CD8-positive, alpha-beta memory T cell (primary cell): ENCODE measurements at regions of chr19 and their contacts with region 1.

Region 1: GRCh38 chr19:47707135-47707925 is 5.9 kb upstream of the EHD2 start:
- DNase-seq: peak; percentile 47 to 77 (median 54)
- H3K4me3 ChIP-seq: no peak overlapping the region
- H3K4me3 Mint-ChIP-seq: no peak overlapping the region
- H3K27ac ChIP-seq: no peak overlapping the region
- H3K27ac Mint-ChIP-seq: peak overlapping the region in 2 of 8 donors; percentile 24 to 74
- H3K4me1 ChIP-seq: no peaks in the 10 kb centered on the region
- H3K4me1 Mint-ChIP-seq: peaks cover 2 to 7% (median 5%) of the 10 kb centered on the region in 3 donors
- H3K27me3 ChIP-seq: peaks cover 4% of the 10 kb centered on the region
- H3K27me3 Mint-ChIP-seq: peaks cover 18 to 21% of the 10 kb centered on the region in 2 donors

Region 2: DNA sequence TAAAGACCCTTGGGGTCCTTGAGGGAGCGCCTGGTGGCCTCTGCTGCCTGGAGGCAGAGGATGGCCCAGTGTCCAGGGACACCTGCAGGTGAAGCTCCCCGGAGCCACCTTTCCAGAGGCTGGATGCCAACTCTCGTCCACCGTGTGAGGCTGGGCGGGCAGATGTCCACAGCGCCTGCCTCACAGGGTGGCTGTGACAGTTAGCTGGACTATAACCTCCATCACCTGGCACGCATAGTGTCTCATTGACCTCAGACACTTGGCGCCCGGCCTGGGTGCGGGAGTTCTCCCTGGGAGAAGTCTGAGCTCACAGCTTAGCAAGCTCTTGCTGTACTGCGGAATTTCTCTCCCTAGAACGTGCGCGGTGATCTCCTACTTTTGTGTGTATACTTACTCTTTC is 88.6 kb before region 1 on chr19:
- CTCF ChIA-PET with region 1: no interaction called
- POLR2A ChIA-PET with region 1: no interaction called
- DNase-seq: no peak
- H3K4me3 ChIP-seq: no peak overlapping the region
- H3K4me3 Mint-ChIP-seq: no peak overlapping the region
- H3K27ac ChIP-seq: no peak overlapping the region
- H3K27ac Mint-ChIP-seq: no peak overlapping the region
- H3K4me1 ChIP-seq: no peaks in the 10 kb centered on the region
- H3K4me1 Mint-ChIP-seq: peaks cover 33 to 59% (median 42%) of the 10 kb centered on the region in 3 donors
- H3K27me3 ChIP-seq: no peaks in the 10 kb centered on the region
- H3K27me3 Mint-ChIP-seq: no peaks in the 10 kb centered on the region

Region 3: DNA sequence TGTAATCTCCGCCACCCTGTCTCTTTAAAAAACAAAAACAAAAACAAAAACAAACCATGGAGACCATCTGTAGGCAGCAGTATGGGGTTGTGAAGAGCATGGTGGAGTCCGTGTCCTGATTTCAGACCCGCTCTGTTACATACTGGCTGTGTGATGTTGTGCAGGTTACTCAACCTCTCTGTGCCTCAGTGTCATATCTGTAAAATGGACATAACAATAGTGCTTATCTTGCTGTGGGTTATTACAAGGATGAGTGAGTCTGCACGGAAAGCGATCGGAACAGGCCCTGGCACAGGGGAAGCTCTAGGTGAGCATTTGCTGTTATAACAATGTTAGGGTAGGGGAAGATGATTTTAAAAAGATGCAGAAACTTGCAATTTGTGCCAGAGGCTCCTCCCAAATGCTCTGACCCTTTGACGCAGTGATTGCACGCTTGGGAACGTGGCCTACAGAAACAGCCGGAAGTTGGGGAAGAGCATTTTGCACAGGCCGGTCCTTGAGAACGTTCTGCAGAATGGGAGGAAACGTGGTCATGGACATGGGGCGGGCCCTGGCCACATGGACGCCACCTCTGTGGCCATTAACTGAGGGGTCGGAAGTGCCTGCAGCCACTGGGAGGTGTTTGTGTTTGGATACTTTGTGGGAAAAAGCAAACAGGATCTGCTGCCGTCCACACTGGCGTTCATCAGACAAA is 55.4 kb after region 1 on chr19:
- CTCF ChIA-PET with region 1: no interaction called
- POLR2A ChIA-PET with region 1: interaction called, 11 read pairs
- DNase-seq: no peak
- H3K4me3 ChIP-seq: no peak overlapping the region
- H3K4me3 Mint-ChIP-seq: no peak overlapping the region
- H3K27ac ChIP-seq: no peak overlapping the region
- H3K27ac Mint-ChIP-seq: no peak overlapping the region
- H3K4me1 ChIP-seq: no peaks in the 10 kb centered on the region
- H3K4me1 Mint-ChIP-seq: no peaks in the 10 kb centered on the region
- H3K27me3 ChIP-seq: no peaks in the 10 kb centered on the region
- H3K27me3 Mint-ChIP-seq: no peaks in the 10 kb centered on the region